ENCODE measurements at regions of chr2 and their contacts with region 1.

Region 1: GRCh38 chr2:73984203-73984921 is at the start of gene TET3:
- DNase-seq: no peak
- H3K4me3 ChIP-seq: peak within 1 kb of the TSS; percentile 45 to 71 (median 69)
- H3K27ac ChIP-seq: peak within 1 kb of the TSS; percentile 85
- H3K4me1 ChIP-seq: peaks cover 73% of the 10 kb centered on the region
- H3K27me3 ChIP-seq: no peaks in the 10 kb centered on the region
- CTCF ChIP-seq: no peak
- total RNA-seq, gene TET3: 6.0 to 14.9 TPM

Region 2: GRCh38 chr2:73828818-73829570 is 155.4 kb before region 1 on chr2 and contains the start of gene STAMBP:
- CTCF ChIA-PET with region 1: interaction called, 12 read pairs
- dilution Hi-C with region 1: no loop called
- in situ Hi-C with region 1: no loop called
- intact Hi-C with region 1: loop called (anchors 1 kb)
- DNase-seq: peak; percentile 94
- H3K4me3 ChIP-seq: peak within 1 kb of the TSS; percentile 70 to 85 (median 81)
- H3K27ac ChIP-seq: peak within 1 kb of the TSS; percentile 94
- H3K4me1 ChIP-seq: peaks cover 26% of the 10 kb centered on the region
- H3K27me3 ChIP-seq: no peaks in the 10 kb centered on the region
- CTCF ChIP-seq: no peak
- total RNA-seq, gene STAMBP: 52.2 to 77.8 TPM

Region 3: DNA sequence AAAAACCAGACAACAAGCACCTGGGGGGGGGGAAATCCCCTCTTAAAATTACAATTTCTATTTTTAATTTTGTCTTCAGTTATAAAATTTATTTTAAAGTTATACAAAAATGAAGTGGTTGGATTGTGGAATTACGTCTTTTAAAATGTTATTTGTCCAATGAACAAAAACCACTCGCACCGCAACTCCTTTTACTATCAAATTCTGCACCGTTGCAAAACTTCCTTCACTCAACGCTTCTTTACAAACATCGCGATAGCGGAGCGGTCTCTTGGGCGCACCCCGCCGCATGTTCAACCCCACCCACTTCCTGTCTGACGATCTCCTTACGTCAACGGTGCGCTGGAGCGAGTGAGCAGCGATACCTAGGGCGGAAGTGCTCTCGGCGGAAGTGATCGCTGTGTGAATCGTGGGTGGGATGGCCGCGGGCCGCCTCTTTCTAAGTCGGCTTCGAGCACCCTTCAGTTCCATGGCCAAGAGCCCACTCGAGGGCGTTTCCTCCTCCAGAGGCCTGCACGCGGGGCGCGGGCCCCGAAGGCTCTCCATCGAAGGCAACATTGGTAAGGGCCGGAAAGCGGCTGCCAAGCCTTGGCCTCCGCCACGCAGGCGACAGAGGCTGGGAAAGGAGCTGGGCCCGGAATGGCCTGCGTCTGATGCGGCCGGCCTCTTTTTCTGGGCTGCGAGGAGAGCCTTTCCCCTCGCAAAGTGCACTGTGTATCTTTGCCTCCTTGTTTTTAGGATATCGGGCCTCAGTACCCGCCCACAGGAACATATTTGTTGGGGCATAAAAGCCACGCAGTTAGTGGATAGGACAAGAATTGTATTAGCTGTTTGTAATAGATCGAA is 57.6 kb before region 1 on chr2 and contains the start of gene DGUOK:
- CTCF ChIA-PET with region 1: no interaction called
- dilution Hi-C with region 1: loop called (anchors 5 kb)
- in situ Hi-C with region 1: no loop called
- intact Hi-C with region 1: loop called (anchors 1 kb)
- DNase-seq: peak; percentile 99
- H3K4me3 ChIP-seq: peak within 1 kb of the TSS; percentile 60 to 79 (median 68)
- H3K27ac ChIP-seq: peak within 1 kb of the TSS; percentile 97
- H3K4me1 ChIP-seq: peaks cover 44% of the 10 kb centered on the region
- H3K27me3 ChIP-seq: no peaks in the 10 kb centered on the region
- CTCF ChIP-seq: no peak
- total RNA-seq, gene DGUOK: 56.3 to 78.2 TPM

Region 4: GRCh38 chr2:73939419-73939818 is 44.9 kb before region 1 on chr2:
- CTCF ChIA-PET with region 1: no interaction called
- dilution Hi-C with region 1: loop called (anchors 5 kb)
- in situ Hi-C with region 1: no loop called
- intact Hi-C with region 1: loop called (anchors 1 kb)
- DNase-seq: peak; percentile 98
- H3K4me3 ChIP-seq: no peak overlapping the region
- H3K27ac ChIP-seq: peak overlapping the region; percentile 89
- H3K4me1 ChIP-seq: peaks cover 58% of the 10 kb centered on the region
- H3K27me3 ChIP-seq: no peaks in the 10 kb centered on the region
- CTCF ChIP-seq: peak in 1 of 2 donors; percentile 60

Region 5: GRCh38 chr2:74147727-74148456 is 163.5 kb after region 1 on chr2 and contains the start of gene BOLA3:
- CTCF ChIA-PET with region 1: no interaction called
- dilution Hi-C with region 1: no loop called
- in situ Hi-C with region 1: no loop called
- intact Hi-C with region 1: loop called (anchors 5 kb)
- DNase-seq: peak; percentile 81
- H3K4me3 ChIP-seq: peak within 1 kb of the TSS; percentile 58 to 80 (median 66)
- H3K27ac ChIP-seq: peak within 1 kb of the TSS; percentile 66
- H3K4me1 ChIP-seq: peaks cover 16% of the 10 kb centered on the region
- H3K27me3 ChIP-seq: no peaks in the 10 kb centered on the region
- CTCF ChIP-seq: peak; percentile 23 to 52
- total RNA-seq, gene BOLA3: 20.5 to 80.6 TPM